IMR-90 (cell line): ENCODE measurements at regions of chr2 and their contacts with region 1.

Region 1: DNA sequence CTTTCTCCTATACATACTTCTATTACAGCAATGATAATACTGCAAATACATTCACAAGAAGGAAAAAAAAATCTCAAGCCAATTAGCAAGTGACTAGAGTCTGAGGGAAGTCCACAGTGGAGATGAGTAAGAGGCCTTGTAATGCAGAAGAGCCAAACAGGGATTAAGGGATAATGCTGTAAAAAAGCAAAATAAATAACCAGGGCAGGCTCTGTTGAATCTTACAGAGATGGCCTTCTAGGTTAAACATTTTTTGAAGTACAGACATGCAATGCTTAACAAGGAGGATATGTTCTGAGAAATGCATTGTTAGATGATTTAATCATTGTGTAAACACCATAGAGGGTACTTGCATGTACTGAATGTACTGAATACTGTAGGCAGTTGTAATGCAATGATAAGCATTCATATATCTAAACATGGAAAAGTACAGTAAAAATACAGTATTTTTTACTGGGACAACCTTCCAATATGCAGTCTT is 122.1 kb upstream of the RMDN2 start:
- DNase-seq: peak; percentile 99
- ATAC-seq: peak; percentile 93
- H3K4me3 ChIP-seq: no peak overlapping the region
- H3K27ac ChIP-seq: peak overlapping the region; percentile 100
- H3K4me1 ChIP-seq: peaks cover 29% of the 10 kb centered on the region
- H3K27me3 ChIP-seq: no peaks in the 10 kb centered on the region
- CTCF ChIP-seq: no peak
- POLR2A ChIP-seq: no peak
- RAD21 ChIP-seq: peak; percentile 28

Region 2: GRCh38 chr2:37767956-37768925 is 34.7 kb before region 1 on chr2:
- CTCF ChIA-PET with region 1: no interaction called
- POLR2A ChIA-PET with region 1: interaction called, 3 read pairs
- dilution Hi-C with region 1: no loop called
- in situ Hi-C with region 1: no loop called
- intact Hi-C with region 1: loop called (anchors 5 kb)
- DNase-seq: peak; percentile 92
- ATAC-seq: peak; percentile 86
- H3K4me3 ChIP-seq: no peak overlapping the region
- H3K27ac ChIP-seq: peak overlapping the region; percentile 97
- H3K4me1 ChIP-seq: peaks cover 37% of the 10 kb centered on the region
- H3K27me3 ChIP-seq: no peaks in the 10 kb centered on the region
- CTCF ChIP-seq: no peak
- POLR2A ChIP-seq: no peak
- RAD21 ChIP-seq: no peak

Region 3: DNA sequence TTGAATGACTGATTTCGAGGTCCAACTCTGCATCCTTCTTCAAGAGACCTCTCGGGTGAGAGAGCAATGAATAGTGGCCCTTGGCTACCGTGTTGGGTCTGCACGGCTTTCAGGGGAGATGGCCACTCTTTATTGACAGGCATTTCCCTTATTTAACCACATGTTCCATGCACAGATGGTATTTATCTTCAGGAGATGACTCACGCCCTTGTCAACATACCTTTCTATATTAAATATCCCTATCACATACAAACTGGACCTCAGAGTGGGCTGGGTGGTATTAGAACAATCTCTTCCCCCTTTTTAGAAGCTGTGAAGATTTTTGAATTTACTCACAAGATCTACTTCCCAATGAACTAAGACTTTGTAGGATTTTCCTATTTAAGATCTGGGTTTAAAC is 21.9 kb before region 1 on chr2:
- CTCF ChIA-PET with region 1: interaction called, 4 read pairs
- POLR2A ChIA-PET with region 1: interaction called, 10 read pairs
- dilution Hi-C with region 1: no loop called
- in situ Hi-C with region 1: no loop called
- intact Hi-C with region 1: no loop called
- DNase-seq: peak; percentile 86
- ATAC-seq: peak; percentile 16
- H3K4me3 ChIP-seq: no peak overlapping the region
- H3K27ac ChIP-seq: peak overlapping the region; percentile 63
- H3K4me1 ChIP-seq: peaks cover 63% of the 10 kb centered on the region
- H3K27me3 ChIP-seq: no peaks in the 10 kb centered on the region
- CTCF ChIP-seq: no peak
- POLR2A ChIP-seq: no peak
- RAD21 ChIP-seq: no peak